ENCODE measurements at regions of chr5 and their contacts with region 1.

Region 1: GRCh38 chr5:172833686-172834414 is at the start of gene ERGIC1:
- DNase-seq: no peak
- ATAC-seq: peak; percentile 86
- H3K4me3 ChIP-seq: peak within 1 kb of the TSS; percentile 97
- H3K27ac ChIP-seq: peak within 1 kb of the TSS; percentile 95
- H3K4me1 ChIP-seq: peaks cover 33% of the 10 kb centered on the region
- H3K27me3 ChIP-seq: no peaks in the 10 kb centered on the region
- CTCF ChIP-seq: no peak
- EP300 ChIP-seq: no peak
- POLR2A ChIP-seq: peak; percentile 72
- RAD21 ChIP-seq: no peak
- polyA plus RNA-seq, gene ERGIC1: 8.8 to 21.0 TPM

Region 2: GRCh38 chr5:172683696-172684471 is 150.0 kb before region 1 on chr5:
- CTCF ChIA-PET with region 1: no interaction called
- POLR2A ChIA-PET with region 1: no interaction called
- RAD21 ChIA-PET with region 1: no interaction called
- SMC1A ChIA-PET with region 1: no interaction called
- in situ Hi-C with region 1: no loop called
- intact Hi-C with region 1: no loop called
- DNase-seq: no peak
- ATAC-seq: no peak
- H3K4me3 ChIP-seq: no peak overlapping the region
- H3K27ac ChIP-seq: no peak overlapping the region
- H3K4me1 ChIP-seq: peaks cover 11% of the 10 kb centered on the region
- H3K27me3 ChIP-seq: no peaks in the 10 kb centered on the region
- CTCF ChIP-seq: no peak
- EP300 ChIP-seq: no peak
- POLR2A ChIP-seq: no peak
- RAD21 ChIP-seq: no peak

Region 3: GRCh38 chr5:172770675-172771438 is 63.0 kb before region 1 on chr5 and contains the start of gene DUSP1:
- CTCF ChIA-PET with region 1: interaction called, 37 read pairs
- POLR2A ChIA-PET with region 1: interaction called, 45 read pairs
- RAD21 ChIA-PET with region 1: interaction called, 35 read pairs
- SMC1A ChIA-PET with region 1: interaction called, 33 read pairs
- in situ Hi-C with region 1: no loop called
- intact Hi-C with region 1: loop called (anchors 1 kb)
- DNase-seq: no peak
- ATAC-seq: peak; percentile 76
- H3K4me3 ChIP-seq: peak within 1 kb of the TSS; percentile 73
- H3K27ac ChIP-seq: peak within 1 kb of the TSS; percentile 72
- H3K4me1 ChIP-seq: peaks cover 23% of the 10 kb centered on the region
- H3K27me3 ChIP-seq: no peaks in the 10 kb centered on the region
- CTCF ChIP-seq: peak; percentile 57 to 65 (median 59); a peak in 5 of 6 replicates
- EP300 ChIP-seq: 0 out of 4 replicates have a peak, but pooled peaks of 1 of the 2 experiments have one; percentile 32
- POLR2A ChIP-seq: peak; percentile 95
- RAD21 ChIP-seq: peak; percentile 48
- polyA plus RNA-seq, gene DUSP1: 1.4 to 1.9 TPM

Region 4: GRCh38 chr5:172806897-172807672 is 26.8 kb before region 1 on chr5:
- CTCF ChIA-PET with region 1: interaction called, 3 read pairs
- POLR2A ChIA-PET with region 1: interaction called, 16 read pairs
- RAD21 ChIA-PET with region 1: interaction called, 4 read pairs
- SMC1A ChIA-PET with region 1: interaction called, 7 read pairs
- in situ Hi-C with region 1: no loop called
- intact Hi-C with region 1: no loop called
- DNase-seq: peak; percentile 81
- ATAC-seq: peak; percentile 100
- H3K4me3 ChIP-seq: peak overlapping the region; percentile 62
- H3K27ac ChIP-seq: peak overlapping the region; percentile 64
- H3K4me1 ChIP-seq: peaks cover 6% of the 10 kb centered on the region
- H3K27me3 ChIP-seq: no peaks in the 10 kb centered on the region
- CTCF ChIP-seq: no peak
- EP300 ChIP-seq: no peak
- POLR2A ChIP-seq: peak; percentile 54
- RAD21 ChIP-seq: no peak

Region 5: DNA sequence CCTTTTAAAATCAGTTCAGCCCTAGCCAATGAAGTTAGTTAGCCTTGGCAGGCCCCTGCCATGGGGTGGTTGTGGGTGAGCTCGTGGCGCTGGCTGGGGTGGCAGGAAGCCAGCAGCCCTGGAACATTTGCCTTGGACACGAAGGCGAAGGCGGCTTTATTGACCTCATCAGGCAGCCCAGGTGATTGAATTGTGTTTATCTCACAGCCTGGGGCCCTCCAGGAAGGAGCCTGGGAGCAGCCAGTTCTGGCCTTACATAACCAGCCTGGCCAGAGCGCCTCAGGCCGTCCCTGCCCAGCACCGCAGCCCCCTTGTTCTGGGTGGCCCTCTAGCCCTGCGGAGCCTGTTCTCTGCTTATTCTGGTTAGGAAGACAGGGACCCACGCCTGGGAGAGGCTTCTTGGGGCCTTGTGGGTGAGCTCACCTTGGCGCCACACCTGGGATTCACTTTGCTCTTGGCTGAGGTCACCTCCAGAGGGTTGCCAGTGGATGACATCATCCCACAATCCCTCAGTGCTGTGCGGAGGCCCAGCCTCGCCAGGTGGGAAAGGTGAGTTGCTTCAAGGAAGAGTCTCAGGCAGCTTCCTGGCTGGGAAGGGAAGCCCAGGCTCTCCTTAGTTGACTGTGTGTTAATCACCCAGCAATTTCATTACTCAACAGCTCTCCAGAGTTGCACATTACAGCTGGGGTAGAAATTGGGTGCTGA is 70.9 kb after region 1 on chr5:
- CTCF ChIA-PET with region 1: no interaction called
- POLR2A ChIA-PET with region 1: interaction called, 5 read pairs
- RAD21 ChIA-PET with region 1: interaction called, 3 read pairs
- SMC1A ChIA-PET with region 1: interaction called, 6 read pairs
- in situ Hi-C with region 1: no loop called
- intact Hi-C with region 1: loop called (anchors 5 kb)
- DNase-seq: no peak
- ATAC-seq: no peak
- H3K4me3 ChIP-seq: no peak overlapping the region
- H3K27ac ChIP-seq: no peak overlapping the region
- H3K4me1 ChIP-seq: peaks cover 18% of the 10 kb centered on the region
- H3K27me3 ChIP-seq: no peaks in the 10 kb centered on the region
- CTCF ChIP-seq: no peak
- EP300 ChIP-seq: no peak
- POLR2A ChIP-seq: no peak
- RAD21 ChIP-seq: no peak

Region 6: GRCh38 chr5:173035904-173036707 is 202.3 kb after region 1 on chr5:
- CTCF ChIA-PET with region 1: no interaction called
- POLR2A ChIA-PET with region 1: no interaction called
- RAD21 ChIA-PET with region 1: no interaction called
- SMC1A ChIA-PET with region 1: no interaction called
- in situ Hi-C with region 1: no loop called
- intact Hi-C with region 1: no loop called
- DNase-seq: peak; percentile 88
- ATAC-seq: peak; percentile 85
- H3K4me3 ChIP-seq: peak overlapping the region; percentile 65
- H3K27ac ChIP-seq: peak overlapping the region; percentile 89
- H3K4me1 ChIP-seq: peaks cover 29% of the 10 kb centered on the region
- H3K27me3 ChIP-seq: no peaks in the 10 kb centered on the region
- CTCF ChIP-seq: no peak
- EP300 ChIP-seq: peak in 1 of 2 experiments; percentile 59; a peak in 2 of 4 replicates
- POLR2A ChIP-seq: peak; percentile 53
- RAD21 ChIP-seq: no peak

Region 7: GRCh38 chr5:173331956-173332479 is 498.2 kb after region 1 on chr5:
- CTCF ChIA-PET with region 1: no interaction called
- POLR2A ChIA-PET with region 1: no interaction called
- RAD21 ChIA-PET with region 1: no interaction called
- SMC1A ChIA-PET with region 1: no interaction called
- in situ Hi-C with region 1: no loop called
- intact Hi-C with region 1: loop called (anchors 5 kb)
- DNase-seq: peak; percentile 42
- ATAC-seq: peak; percentile 98
- H3K4me3 ChIP-seq: no peak overlapping the region
- H3K27ac ChIP-seq: no peak overlapping the region
- H3K4me1 ChIP-seq: no peaks in the 10 kb centered on the region; the same call in 1 of the 2 replicates
- H3K27me3 ChIP-seq: peaks cover 0 to 2% of the 10 kb centered on the region in 2 experiments; a peak in 2 of 4 replicates
- CTCF ChIP-seq: peak; percentile 88 to 94 (median 92)
- EP300 ChIP-seq: no peak
- POLR2A ChIP-seq: no peak
- RAD21 ChIP-seq: peak; percentile 88

Measured in GM12878 (cell line).